ENCODE measurements at regions of chr5 and their contacts with region 1.

Region 1: GRCh38 chr5:93724791-93725190 is 16.6 kb downstream of the POU5F2 start:
- DNase-seq: no peak
- ATAC-seq: no peak
- H3K4me3 ChIP-seq: no peak overlapping the region
- H3K27ac ChIP-seq: no peak overlapping the region
- H3K4me1 ChIP-seq: peaks cover 0 to 6% (median 0%) of the 10 kb centered on the region in 9 donors
- H3K27me3 ChIP-seq: no peaks in the 10 kb centered on the region
- CTCF ChIP-seq: no peak

Region 2: GRCh38 chr5:92309336-92309991 is 1415.3 kb before region 1 on chr5:
- intact Hi-C with region 1: loop called in 1 of 10 experiments (anchors 5 kb)
- DNase-seq: no peak
- ATAC-seq: no peak
- H3K4me3 ChIP-seq: no peak overlapping the region
- H3K27ac ChIP-seq: no peak overlapping the region
- H3K4me1 ChIP-seq: no peaks in the 10 kb centered on the region
- H3K27me3 ChIP-seq: no peaks in the 10 kb centered on the region
- CTCF ChIP-seq: peak in 8 of 9 donors; percentile 14 to 57 (median 42)